Activated CD4-positive, alpha-beta T cell treated with anti-CD3 and anti-CD28 coated beads, Interleukin-2, amount 10 ng/mL, durations not matched to agents 7 days and 5 days (primary cell): ENCODE measurements at regions of chr10 and their contacts with region 1.

Region 1: DNA sequence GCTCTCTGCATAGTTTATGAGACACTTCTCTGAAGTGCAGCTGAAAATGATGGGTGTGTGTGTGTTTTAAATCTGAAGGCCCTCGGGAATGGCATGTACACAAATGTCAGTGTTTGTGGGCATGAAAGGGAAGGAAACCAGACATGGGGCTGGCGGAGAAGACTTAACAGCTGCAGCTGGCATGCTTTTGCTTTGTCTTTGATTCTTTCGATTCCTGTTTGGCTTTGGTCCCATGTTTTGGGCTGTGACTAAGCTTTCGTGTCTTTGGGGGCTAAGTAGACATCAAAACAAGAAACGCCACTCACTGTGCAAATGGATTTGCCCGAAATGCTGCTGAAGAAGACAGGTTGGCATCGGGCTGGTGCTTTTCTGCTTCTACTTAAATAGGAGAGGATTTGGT is 179.3 kb downstream of the PFKFB3 start:
- DNase-seq: peak; percentile 54
- H3K4me3 Mint-ChIP-seq: peak overlapping the region; percentile 49
- H3K27ac Mint-ChIP-seq: peak overlapping the region; percentile 84
- H3K4me1 Mint-ChIP-seq: peaks cover 35% of the 10 kb centered on the region
- H3K27me3 Mint-ChIP-seq: no peaks in the 10 kb centered on the region

Region 2: GRCh38 chr10:6254201-6254600 is 127.9 kb before region 1 on chr10:
- CTCF ChIA-PET with region 1: no interaction called
- POLR2A ChIA-PET with region 1: no interaction called
- DNase-seq: no peak
- H3K4me3 Mint-ChIP-seq: no peak overlapping the region
- H3K27ac Mint-ChIP-seq: no peak overlapping the region
- H3K4me1 Mint-ChIP-seq: no peaks in the 10 kb centered on the region
- H3K27me3 Mint-ChIP-seq: no peaks in the 10 kb centered on the region

Region 3: GRCh38 chr10:6364893-6365292 is 17.2 kb before region 1 on chr10:
- CTCF ChIA-PET with region 1: interaction called, 12 read pairs
- POLR2A ChIA-PET with region 1: interaction called, 5 read pairs
- DNase-seq: no peak
- H3K4me3 Mint-ChIP-seq: no peak overlapping the region
- H3K27ac Mint-ChIP-seq: no peak overlapping the region
- H3K4me1 Mint-ChIP-seq: no peaks in the 10 kb centered on the region
- H3K27me3 Mint-ChIP-seq: no peaks in the 10 kb centered on the region

Region 4: DNA sequence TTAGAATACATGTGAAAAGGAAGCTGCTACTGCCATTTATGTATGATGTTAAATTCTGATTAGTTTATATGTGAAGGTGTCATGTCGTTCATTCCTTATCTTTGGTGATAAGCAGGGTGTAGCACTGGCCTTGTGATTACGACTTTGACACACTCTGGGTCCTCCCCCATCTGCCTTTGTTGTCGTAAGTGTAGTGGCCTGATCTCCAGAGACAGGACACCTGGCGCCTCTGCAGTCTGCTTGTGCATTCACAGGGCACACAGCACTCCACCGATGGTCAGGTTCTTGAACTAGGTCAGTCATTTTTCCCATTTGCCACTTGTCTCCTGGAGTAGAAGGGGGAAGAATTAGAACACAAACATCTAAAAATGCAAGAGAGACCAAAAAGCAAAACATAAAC is 12.0 kb after region 1 on chr10:
- CTCF ChIA-PET with region 1: no interaction called
- POLR2A ChIA-PET with region 1: no interaction called
- DNase-seq: no peak
- H3K4me3 Mint-ChIP-seq: no peak overlapping the region
- H3K27ac Mint-ChIP-seq: no peak overlapping the region
- H3K4me1 Mint-ChIP-seq: peaks cover 4% of the 10 kb centered on the region
- H3K27me3 Mint-ChIP-seq: no peaks in the 10 kb centered on the region